ENCODE measurements at regions of chr6 and their contacts with region 1.

Region 1: DNA sequence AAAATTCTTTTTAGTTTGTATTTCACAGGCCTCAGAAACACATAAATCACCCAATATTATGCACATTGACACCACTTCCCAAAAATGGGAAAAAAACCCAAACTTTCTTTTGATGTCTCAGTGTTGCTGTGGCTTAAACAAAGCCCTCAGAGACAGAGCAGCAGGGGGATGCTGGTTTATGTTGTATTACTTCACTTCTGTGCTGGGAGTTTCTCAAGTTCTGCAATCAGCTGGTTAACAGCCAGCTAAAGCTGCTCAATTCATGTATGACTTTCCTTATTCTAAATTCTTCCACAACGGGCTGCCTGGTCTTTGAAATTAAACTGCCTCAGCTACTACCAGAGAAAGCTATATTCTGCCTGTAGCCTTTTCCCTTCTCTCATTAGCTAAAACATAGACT is 5.6 kb downstream of the FILIP1 start:
- DNase-seq: no peak
- ATAC-seq: peak; percentile 39
- H3K4me3 ChIP-seq: no peak overlapping the region
- H3K27ac ChIP-seq: no peak overlapping the region
- H3K4me1 ChIP-seq: peaks cover 4% of the 10 kb centered on the region; the same call in 1 of the 2 replicates
- H3K27me3 ChIP-seq: no peaks in the 10 kb centered on the region
- CTCF ChIP-seq: no peak
- EP300 ChIP-seq: no peak
- POLR2A ChIP-seq: no peak
- RAD21 ChIP-seq: no peak

Region 2: GRCh38 chr6:75472885-75473284 is 15.1 kb before region 1 on chr6:
- CTCF ChIA-PET with region 1: interaction called, 4 read pairs
- POLR2A ChIA-PET with region 1: interaction called, 6 read pairs
- RAD21 ChIA-PET with region 1: interaction called, 8 read pairs
- SMC1A ChIA-PET with region 1: interaction called, 12 read pairs
- in situ Hi-C with region 1: no loop called
- intact Hi-C with region 1: loop called (anchors 2 kb)
- DNase-seq: no peak
- ATAC-seq: peak; percentile 96
- H3K4me3 ChIP-seq: 0 out of 2 replicates have a peak overlapping the region, but pooled peaks have one; percentile 5
- H3K27ac ChIP-seq: no peak overlapping the region
- H3K4me1 ChIP-seq: 0 out of 2 replicates have a peak, but pooled peaks cover 2% of the 10 kb centered on the region
- H3K27me3 ChIP-seq: no peaks in the 10 kb centered on the region
- CTCF ChIP-seq: no peak
- EP300 ChIP-seq: peak in 1 of 2 experiments; percentile 31; a peak in 1 of 4 replicates
- POLR2A ChIP-seq: no peak
- RAD21 ChIP-seq: no peak

Region 3: DNA sequence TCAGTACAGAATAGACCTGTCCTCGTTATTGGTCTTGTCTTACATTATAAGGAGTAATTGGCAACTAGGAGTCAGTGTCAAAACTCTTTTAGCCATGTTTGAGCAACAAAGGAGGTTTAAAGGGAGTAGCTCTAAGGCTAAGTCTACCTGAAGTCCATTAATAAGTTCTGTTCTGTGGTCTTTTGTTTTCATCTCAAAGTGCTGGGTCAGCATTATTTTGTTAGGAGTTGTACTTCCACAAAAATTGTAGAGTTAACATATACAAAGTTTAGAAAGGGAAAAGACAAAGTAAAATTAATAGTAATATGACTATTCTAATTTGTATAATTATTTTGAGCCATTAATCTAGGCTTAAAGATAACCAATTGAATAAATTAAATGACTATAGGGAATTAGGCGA is 100.9 kb after region 1 on chr6:
- CTCF ChIA-PET with region 1: no interaction called
- POLR2A ChIA-PET with region 1: no interaction called
- RAD21 ChIA-PET with region 1: no interaction called
- SMC1A ChIA-PET with region 1: no interaction called
- in situ Hi-C with region 1: no loop called
- intact Hi-C with region 1: no loop called
- DNase-seq: no peak
- ATAC-seq: no peak
- H3K4me3 ChIP-seq: no peak overlapping the region
- H3K27ac ChIP-seq: no peak overlapping the region
- H3K4me1 ChIP-seq: no peaks in the 10 kb centered on the region
- H3K27me3 ChIP-seq: no peaks in the 10 kb centered on the region
- CTCF ChIP-seq: no peak
- EP300 ChIP-seq: no peak
- POLR2A ChIP-seq: no peak
- RAD21 ChIP-seq: no peak

Region 4: GRCh38 chr6:75855052-75855451 is 367.0 kb after region 1 on chr6:
- CTCF ChIA-PET with region 1: no interaction called
- POLR2A ChIA-PET with region 1: no interaction called
- RAD21 ChIA-PET with region 1: no interaction called
- SMC1A ChIA-PET with region 1: no interaction called
- in situ Hi-C with region 1: no loop called
- intact Hi-C with region 1: no loop called
- DNase-seq: no peak
- ATAC-seq: peak; percentile 70
- H3K4me3 ChIP-seq: no peak overlapping the region
- H3K27ac ChIP-seq: no peak overlapping the region
- H3K4me1 ChIP-seq: no peaks in the 10 kb centered on the region
- H3K27me3 ChIP-seq: no peaks in the 10 kb centered on the region
- CTCF ChIP-seq: peak; percentile 48 to 56 (median 52); a peak in 5 of 6 replicates
- EP300 ChIP-seq: no peak
- POLR2A ChIP-seq: no peak
- RAD21 ChIP-seq: peak; percentile 53